K562 (cell line): ENCODE measurements at regions of chr11 and their contacts with region 1.

Region 1: GRCh38 chr11:2377511-2378443 is 667 bp downstream of the CD81 start:
- DNase-seq: peak; percentile 77 to 82 (median 80)
- ATAC-seq: peak; percentile 86
- H3K4me3 ChIP-seq: peak overlapping the region; percentile 96
- H3K27ac ChIP-seq: peak overlapping the region; percentile 85; the same call in 2 of the 3 replicates
- H3K4me1 ChIP-seq: peaks cover 15 to 64% of the 10 kb centered on the region in 2 experiments; a peak in 4 of 5 replicates
- H3K27me3 ChIP-seq: no peaks in the 10 kb centered on the region; a peak in 1 of 5 replicates
- CTCF ChIP-seq: no peak
- EP300 ChIP-seq: no peak
- POLR2A ChIP-seq: no peak
- RAD21 ChIP-seq: no peak

Region 2: GRCh38 chr11:2366261-2366660 is 11.5 kb before region 1 on chr11:
- CTCF ChIA-PET with region 1: no interaction called
- POLR2A ChIA-PET with region 1: interaction called, 11 read pairs
- in situ Hi-C with region 1: no loop called
- intact Hi-C with region 1: no loop called
- DNase-seq: no peak
- ATAC-seq: no peak
- H3K4me3 ChIP-seq: no peak overlapping the region
- H3K27ac ChIP-seq: no peak overlapping the region
- H3K4me1 ChIP-seq: peaks cover 0 to 10% of the 10 kb centered on the region in 2 experiments; a peak in 2 of 5 replicates
- H3K27me3 ChIP-seq: peaks cover 10 to 64% of the 10 kb centered on the region in 2 experiments; a peak in 4 of 5 replicates
- CTCF ChIP-seq: no peak
- EP300 ChIP-seq: no peak
- POLR2A ChIP-seq: no peak
- RAD21 ChIP-seq: no peak

Region 3: DNA sequence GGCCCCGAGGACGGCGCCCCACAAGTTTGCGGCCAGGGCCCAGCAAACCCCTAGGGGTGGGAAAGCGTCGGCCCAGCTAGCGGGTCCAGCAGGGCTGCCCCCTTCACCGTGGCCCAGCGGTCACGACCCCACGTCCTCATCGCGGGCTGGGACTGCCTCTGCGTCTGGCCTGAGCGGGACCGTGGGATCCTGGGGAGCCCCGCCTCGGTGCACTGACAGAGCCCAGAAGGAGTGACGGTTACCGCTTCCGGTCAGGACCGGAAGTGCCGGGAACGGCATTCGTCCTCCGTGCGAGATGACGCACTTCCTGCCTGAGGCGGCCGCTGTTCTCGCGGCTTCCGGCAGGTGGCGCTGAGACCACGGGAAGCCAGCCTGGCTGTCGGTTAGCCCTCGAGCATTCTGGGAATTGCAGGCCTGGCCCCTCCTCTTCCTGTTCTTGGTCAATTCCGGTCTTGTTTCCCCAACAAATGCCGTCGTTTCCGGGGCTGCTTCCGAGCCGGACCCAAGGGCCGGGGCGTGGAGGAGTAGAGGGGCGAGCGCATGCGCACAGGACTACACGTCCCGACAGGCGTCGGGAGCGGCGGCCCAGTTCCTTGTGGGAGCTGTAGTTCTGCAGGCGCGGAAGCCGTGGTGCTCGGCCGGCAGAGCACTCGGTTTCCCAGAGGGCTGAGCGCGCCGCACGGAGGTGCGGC is 22.4 kb after region 1 on chr11 and contains the start of gene TSSC4:
- CTCF ChIA-PET with region 1: no interaction called
- POLR2A ChIA-PET with region 1: interaction called, 11 read pairs
- in situ Hi-C with region 1: no loop called
- intact Hi-C with region 1: no loop called
- DNase-seq: peak; percentile 93 to 99 (median 98)
- ATAC-seq: peak; percentile 91
- H3K4me3 ChIP-seq: peak within 1 kb of the TSS; percentile 87
- H3K27ac ChIP-seq: peak within 1 kb of the TSS; percentile 77
- H3K4me1 ChIP-seq: peaks cover 12 to 73% of the 10 kb centered on the region in 2 experiments; a peak in 4 of 5 replicates
- H3K27me3 ChIP-seq: no peaks in the 10 kb centered on the region
- CTCF ChIP-seq: peak; percentile 95 to 99 (median 99)
- EP300 ChIP-seq: peak; percentile 91
- POLR2A ChIP-seq: peak; percentile 92
- RAD21 ChIP-seq: peak; percentile 71 to 72
- polyA plus RNA-seq, gene TSSC4: 0.41 to 2.8 TPM